GM18951 (cell line): ENCODE measurements at regions of chr2 and their contacts with region 1.

Region 1: GRCh38 chr2:28594289-28595108 is 98.6 kb downstream of the PLB1 start:
- POLR2A ChIP-seq: no peak

Region 2: DNA sequence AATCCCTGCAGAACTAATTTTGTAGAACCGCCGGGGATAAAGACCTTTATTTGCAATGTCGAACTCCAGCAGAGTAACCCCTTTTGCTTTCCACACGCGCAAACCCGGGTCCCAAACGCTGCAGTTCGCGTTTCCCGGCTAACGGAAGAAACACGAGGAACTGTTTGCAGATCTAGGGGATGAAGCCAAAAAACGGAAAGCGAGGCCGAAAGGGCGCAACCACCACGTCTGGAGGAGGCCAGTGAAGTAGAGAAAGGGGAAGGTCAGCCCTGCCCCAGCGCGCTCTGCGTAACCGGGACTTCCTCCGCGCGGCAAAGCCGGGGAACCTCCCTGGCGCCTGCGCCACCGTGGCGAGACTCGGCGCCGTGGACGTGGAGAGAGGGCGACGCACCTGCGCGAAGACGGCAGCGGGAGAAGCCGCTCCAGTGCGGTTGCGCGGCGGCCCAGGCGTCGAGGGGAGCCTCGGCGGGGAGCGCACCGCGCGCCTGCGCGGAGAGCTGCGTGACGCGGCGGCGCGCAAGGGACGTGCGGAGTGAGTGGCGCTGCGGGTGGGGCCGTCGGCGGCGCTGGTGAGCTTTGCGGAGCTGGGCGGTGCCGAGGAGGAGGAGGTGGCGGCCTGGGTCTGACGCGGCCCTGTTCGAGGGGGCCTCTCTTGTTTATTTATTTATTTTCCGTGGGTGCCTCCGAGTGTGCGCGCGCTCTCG is 156.9 kb after region 1 on chr2 and contains the start of gene PPP1CB:
- in situ Hi-C with region 1: loop called (anchors 10 kb)
- POLR2A ChIP-seq: peak; percentile 93